ENCODE measurements at regions of chr13 and their contacts with region 1.

Region 1: DNA sequence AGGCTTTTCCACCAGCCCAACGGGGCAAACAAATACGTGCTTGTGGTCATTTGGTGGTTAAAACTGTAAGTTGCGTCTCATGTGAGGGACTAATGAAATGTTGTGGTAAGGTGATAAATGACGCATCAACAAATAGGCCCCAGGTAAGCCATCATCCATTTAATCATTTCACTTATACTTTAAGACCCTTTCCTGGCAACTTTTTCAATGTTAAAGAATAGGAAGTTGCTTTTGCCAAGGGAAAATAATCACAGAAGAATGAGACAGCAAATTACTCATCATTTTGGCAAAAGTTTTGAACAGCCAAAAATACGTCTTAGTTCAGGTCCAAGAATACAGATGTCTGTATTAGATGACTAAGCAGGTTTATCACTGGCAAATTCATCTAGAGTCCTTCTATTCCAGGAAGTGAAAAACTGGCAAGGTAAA is 660.4 kb downstream of the SLITRK1 start:
- DNase-seq: no peak
- ATAC-seq: no peak
- H3K4me3 ChIP-seq: no peak overlapping the region
- H3K27ac ChIP-seq: no peak overlapping the region
- H3K4me1 ChIP-seq: no peaks in the 10 kb centered on the region
- H3K27me3 ChIP-seq: no peaks in the 10 kb centered on the region

Region 2: DNA sequence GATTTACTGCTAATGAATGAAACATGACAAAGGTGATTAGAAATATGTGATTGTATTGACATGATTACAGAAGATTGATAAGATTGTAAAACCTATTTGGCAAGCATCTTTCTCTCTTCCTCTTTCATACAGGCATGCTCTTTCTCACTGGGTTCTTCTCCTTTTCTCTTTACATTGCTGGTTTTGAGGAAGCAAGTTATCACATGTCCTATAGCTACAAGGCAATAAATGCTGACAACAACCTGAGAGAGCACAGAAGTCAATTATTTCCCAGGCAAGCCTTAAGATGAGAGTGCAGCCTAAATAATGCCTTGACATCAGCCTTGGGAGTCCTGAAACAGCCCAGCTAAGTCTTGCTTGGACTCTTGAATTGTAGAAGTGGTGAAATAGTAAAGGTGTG is 214.6 kb before region 1 on chr13:
- intact Hi-C with region 1: no loop called
- DNase-seq: no peak
- ATAC-seq: no peak
- H3K4me3 ChIP-seq: no peak overlapping the region
- H3K27ac ChIP-seq: no peak overlapping the region
- H3K4me1 ChIP-seq: peaks cover 0 to 3% of the 10 kb centered on the region in 2 donors
- H3K27me3 ChIP-seq: no peaks in the 10 kb centered on the region

Region 3: GRCh38 chr13:83065108-83065507 is 156.7 kb before region 1 on chr13:
- intact Hi-C with region 1: loop called (anchors 10 kb)
- DNase-seq: peak; percentile 68 to 74
- ATAC-seq: peak; percentile 92
- H3K4me3 ChIP-seq: no peak overlapping the region
- H3K27ac ChIP-seq: no peak overlapping the region
- H3K4me1 ChIP-seq: peaks cover 0 to 3% of the 10 kb centered on the region in 2 donors
- H3K27me3 ChIP-seq: no peaks in the 10 kb centered on the region

Region 4: GRCh38 chr13:83190020-83190419 is 31.8 kb before region 1 on chr13:
- intact Hi-C with region 1: no loop called
- DNase-seq: no peak
- ATAC-seq: no peak
- H3K4me3 ChIP-seq: no peak overlapping the region
- H3K27ac ChIP-seq: no peak overlapping the region
- H3K4me1 ChIP-seq: no peaks in the 10 kb centered on the region
- H3K27me3 ChIP-seq: no peaks in the 10 kb centered on the region